ENCODE measurements at regions of chr11 and their contacts with region 1.

Region 1: GRCh38 chr11:85664615-85665481 is at the start of gene CREBZF:
- DNase-seq: peak; percentile 90 to 93 (median 92)
- H3K4me3 ChIP-seq: peak within 1 kb of the TSS; percentile 45 to 87
- H3K4me3 Mint-ChIP-seq: peak within 1 kb of the TSS; percentile 98 to 100 (median 100)
- H3K27ac ChIP-seq: peak within 1 kb of the TSS; percentile 96
- H3K27ac Mint-ChIP-seq: peak within 1 kb of the TSS; percentile 99 to 100 (median 100)
- H3K4me1 ChIP-seq: peaks cover 43% of the 10 kb centered on the region
- H3K4me1 Mint-ChIP-seq: peaks cover 29 to 58% (median 36%) of the 10 kb centered on the region in 4 donors
- H3K27me3 ChIP-seq: no peaks in the 10 kb centered on the region
- H3K27me3 Mint-ChIP-seq: no peaks in the 10 kb centered on the region
- total RNA-seq, gene CREBZF: 103 to 105 TPM

Region 2: DNA sequence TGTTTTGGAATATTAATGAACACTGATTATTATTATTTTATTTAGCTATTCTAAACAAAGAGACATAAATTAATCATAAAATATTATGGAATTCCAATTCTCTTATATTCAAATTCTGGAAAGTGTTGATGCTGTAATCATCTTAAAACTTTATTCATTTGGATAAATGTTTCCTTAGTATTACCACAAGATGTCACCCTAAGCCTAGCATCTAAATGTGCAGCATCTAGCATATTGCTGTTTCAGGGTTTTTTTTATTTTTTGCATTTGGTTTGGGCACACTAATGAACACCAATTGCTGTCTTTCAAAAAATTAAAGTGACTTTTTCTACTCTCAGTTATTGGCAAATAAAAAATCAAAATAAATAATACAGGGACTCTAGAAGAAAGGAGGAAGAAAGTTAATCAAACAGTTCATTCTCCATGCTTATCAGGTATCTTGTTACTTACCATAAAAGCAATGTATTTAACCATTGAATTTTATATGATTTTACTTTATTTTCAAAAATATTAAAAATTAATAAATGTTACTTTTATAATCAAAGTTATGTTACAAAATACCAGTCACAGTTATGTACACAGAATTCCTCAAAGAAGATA is 69.5 kb before region 1 on chr11:
- CTCF ChIA-PET with region 1: interaction called, 4 read pairs
- POLR2A ChIA-PET with region 1: no interaction called
- intact Hi-C with region 1: loop called (anchors 1 kb)
- DNase-seq: peak in 4 of 5 donors; percentile 41 to 63 (median 54)
- H3K4me3 ChIP-seq: no peak overlapping the region
- H3K4me3 Mint-ChIP-seq: no peak overlapping the region
- H3K27ac ChIP-seq: no peak overlapping the region
- H3K27ac Mint-ChIP-seq: no peak overlapping the region
- H3K4me1 ChIP-seq: no peaks in the 10 kb centered on the region
- H3K4me1 Mint-ChIP-seq: no peaks in the 10 kb centered on the region
- H3K27me3 ChIP-seq: no peaks in the 10 kb centered on the region
- H3K27me3 Mint-ChIP-seq: peaks cover 0 to 3% of the 10 kb centered on the region in 2 donors

Region 3: GRCh38 chr11:85619497-85619896 is 45.4 kb before region 1 on chr11:
- CTCF ChIA-PET with region 1: no interaction called
- POLR2A ChIA-PET with region 1: no interaction called
- intact Hi-C with region 1: no loop called
- DNase-seq: no peak
- H3K4me3 ChIP-seq: no peak overlapping the region
- H3K4me3 Mint-ChIP-seq: no peak overlapping the region
- H3K27ac ChIP-seq: no peak overlapping the region
- H3K27ac Mint-ChIP-seq: no peak overlapping the region
- H3K4me1 ChIP-seq: no peaks in the 10 kb centered on the region
- H3K4me1 Mint-ChIP-seq: no peaks in the 10 kb centered on the region
- H3K27me3 ChIP-seq: no peaks in the 10 kb centered on the region
- H3K27me3 Mint-ChIP-seq: no peaks in the 10 kb centered on the region

Region 4: DNA sequence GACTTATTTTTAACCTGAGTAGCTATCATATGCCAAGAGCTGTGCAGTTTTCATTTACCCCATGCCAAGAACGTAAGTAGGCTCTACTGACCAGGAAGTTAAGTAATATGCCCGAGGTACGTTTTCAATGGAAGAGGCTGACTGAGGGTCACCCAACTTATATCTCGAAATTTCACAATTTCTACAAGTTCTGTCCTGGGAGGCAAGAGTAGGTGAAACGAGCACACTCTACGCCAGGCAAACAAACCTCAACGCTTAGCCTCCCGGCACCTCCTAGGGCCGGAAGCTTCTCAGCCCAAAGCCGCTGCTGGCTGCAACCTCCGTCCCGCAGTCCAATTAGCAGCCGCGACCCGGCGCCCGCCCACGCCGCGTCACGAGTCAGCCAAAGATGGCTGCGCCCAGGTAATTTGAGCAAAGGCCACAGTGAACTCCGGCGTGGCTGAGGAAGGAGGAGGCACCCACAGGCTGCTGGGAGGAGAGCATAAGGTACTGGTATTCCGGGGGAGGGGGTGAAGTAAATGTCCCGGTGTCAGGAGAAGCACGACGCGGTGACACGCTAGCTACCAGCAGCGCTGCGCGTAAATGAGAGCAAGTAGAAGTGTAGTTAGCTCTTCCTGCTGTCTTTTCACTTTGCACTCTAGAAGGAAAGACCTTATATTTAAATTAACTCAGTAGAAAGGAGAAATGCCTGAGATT is 17.1 kb before region 1 on chr11 and contains the start of gene TMEM126A:
- CTCF ChIA-PET with region 1: interaction called, 25 read pairs
- POLR2A ChIA-PET with region 1: interaction called, 169 read pairs
- intact Hi-C with region 1: loop called (anchors 1 kb)
- DNase-seq: peak; percentile 87 to 93 (median 89)
- H3K4me3 ChIP-seq: peak within 1 kb of the TSS; percentile 57 to 76
- H3K4me3 Mint-ChIP-seq: peak within 1 kb of the TSS; percentile 92 to 99 (median 96)
- H3K27ac ChIP-seq: peak within 1 kb of the TSS; percentile 72
- H3K27ac Mint-ChIP-seq: peak within 1 kb of the TSS; percentile 88 to 99 (median 96)
- H3K4me1 ChIP-seq: peaks cover 26% of the 10 kb centered on the region
- H3K4me1 Mint-ChIP-seq: peaks cover 19 to 32% (median 27%) of the 10 kb centered on the region in 4 donors
- H3K27me3 ChIP-seq: peaks cover 4% of the 10 kb centered on the region
- H3K27me3 Mint-ChIP-seq: peaks cover 5 to 8% of the 10 kb centered on the region in 2 donors
- total RNA-seq, gene TMEM126A: 17.4 to 17.5 TPM

Region 5: GRCh38 chr11:85682330-85683305 is 17.8 kb after region 1 on chr11:
- CTCF ChIA-PET with region 1: interaction called, 5 read pairs
- POLR2A ChIA-PET with region 1: interaction called, 26 read pairs
- intact Hi-C with region 1: loop called (anchors 2 kb)
- DNase-seq: peak; percentile 32 to 55 (median 40)
- H3K4me3 ChIP-seq: peak overlapping the region; percentile 55 to 60
- H3K4me3 Mint-ChIP-seq: peak overlapping the region; percentile 75 to 93 (median 85)
- H3K27ac ChIP-seq: peak overlapping the region; percentile 49
- H3K27ac Mint-ChIP-seq: peak overlapping the region in 6 of 7 donors; percentile 74 to 87 (median 82)
- H3K4me1 ChIP-seq: peaks cover 12% of the 10 kb centered on the region
- H3K4me1 Mint-ChIP-seq: peaks cover 7 to 25% (median 16%) of the 10 kb centered on the region in 4 donors
- H3K27me3 ChIP-seq: no peaks in the 10 kb centered on the region
- H3K27me3 Mint-ChIP-seq: peaks cover 8 to 9% of the 10 kb centered on the region in 2 donors

Region 6: DNA sequence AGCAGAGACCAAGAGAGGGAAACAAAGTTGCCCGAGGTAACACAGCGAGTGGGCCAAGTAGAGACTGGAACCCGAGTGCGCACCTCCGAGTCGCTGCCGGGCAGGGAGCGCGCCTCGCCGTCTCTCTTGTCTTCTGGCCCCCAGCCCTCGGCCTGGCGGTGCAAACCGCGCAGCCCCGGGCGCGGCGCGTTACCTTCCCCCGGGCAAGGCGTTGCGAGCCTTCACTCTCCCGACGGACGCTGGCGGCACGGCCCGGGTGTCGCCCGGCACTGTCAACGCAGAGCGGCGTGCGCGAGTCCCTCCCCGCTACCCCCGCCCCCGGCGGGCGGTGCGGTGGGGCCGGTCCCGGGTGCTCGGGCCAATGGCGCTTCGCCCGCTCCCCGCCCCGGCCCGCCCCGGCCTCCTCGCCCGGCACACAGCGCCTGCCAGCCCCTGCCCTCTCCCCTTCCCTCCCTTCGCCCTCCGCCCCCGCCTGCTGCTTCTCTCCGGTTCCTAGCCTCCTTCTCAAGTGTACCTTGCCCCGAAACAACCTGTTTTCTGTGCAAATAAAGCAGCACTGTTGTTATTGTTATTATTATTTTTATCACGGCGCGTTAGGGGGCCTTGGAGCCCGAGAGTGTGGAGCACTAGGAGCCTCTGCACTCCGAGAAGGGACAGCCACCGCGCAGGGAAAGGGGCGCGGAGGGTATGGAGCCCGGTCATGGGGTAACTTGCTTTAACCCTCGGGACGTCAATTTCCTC is 146.2 kb after region 1 on chr11 and contains the start of gene SYTL2:
- CTCF ChIA-PET with region 1: no interaction called
- POLR2A ChIA-PET with region 1: interaction called, 15 read pairs
- intact Hi-C with region 1: no loop called
- DNase-seq: peak; percentile 74 to 83 (median 78)
- H3K4me3 ChIP-seq: peak within 1 kb of the TSS; percentile 58 to 85
- H3K4me3 Mint-ChIP-seq: peak within 1 kb of the TSS; percentile 89 to 97 (median 94)
- H3K27ac ChIP-seq: peak within 1 kb of the TSS; percentile 59
- H3K27ac Mint-ChIP-seq: peak within 1 kb of the TSS; percentile 90 to 96 (median 94)
- H3K4me1 ChIP-seq: peaks cover 38% of the 10 kb centered on the region
- H3K4me1 Mint-ChIP-seq: peaks cover 21 to 69% (median 45%) of the 10 kb centered on the region in 4 donors
- H3K27me3 ChIP-seq: no peaks in the 10 kb centered on the region
- H3K27me3 Mint-ChIP-seq: peaks cover 0 to 3% of the 10 kb centered on the region in 2 donors
- total RNA-seq, gene SYTL2: 35.5 to 35.7 TPM

Region 7: GRCh38 chr11:85854557-85855340 is 189.9 kb after region 1 on chr11:
- CTCF ChIA-PET with region 1: interaction called, 4 read pairs
- POLR2A ChIA-PET with region 1: interaction called, 11 read pairs
- intact Hi-C with region 1: loop called (anchors 1 kb)
- DNase-seq: peak; percentile 84 to 93 (median 88)
- H3K4me3 ChIP-seq: peak overlapping the region; percentile 81 to 95
- H3K4me3 Mint-ChIP-seq: peak overlapping the region; percentile 86 to 94 (median 91)
- H3K27ac ChIP-seq: peak overlapping the region; percentile 73
- H3K27ac Mint-ChIP-seq: peak overlapping the region; percentile 91 to 96 (median 94)
- H3K4me1 ChIP-seq: peaks cover 16% of the 10 kb centered on the region
- H3K4me1 Mint-ChIP-seq: peaks cover 6 to 16% (median 11%) of the 10 kb centered on the region in 4 donors
- H3K27me3 ChIP-seq: no peaks in the 10 kb centered on the region
- H3K27me3 Mint-ChIP-seq: peaks cover 0 to 2% of the 10 kb centered on the region in 2 donors

Region 8: DNA sequence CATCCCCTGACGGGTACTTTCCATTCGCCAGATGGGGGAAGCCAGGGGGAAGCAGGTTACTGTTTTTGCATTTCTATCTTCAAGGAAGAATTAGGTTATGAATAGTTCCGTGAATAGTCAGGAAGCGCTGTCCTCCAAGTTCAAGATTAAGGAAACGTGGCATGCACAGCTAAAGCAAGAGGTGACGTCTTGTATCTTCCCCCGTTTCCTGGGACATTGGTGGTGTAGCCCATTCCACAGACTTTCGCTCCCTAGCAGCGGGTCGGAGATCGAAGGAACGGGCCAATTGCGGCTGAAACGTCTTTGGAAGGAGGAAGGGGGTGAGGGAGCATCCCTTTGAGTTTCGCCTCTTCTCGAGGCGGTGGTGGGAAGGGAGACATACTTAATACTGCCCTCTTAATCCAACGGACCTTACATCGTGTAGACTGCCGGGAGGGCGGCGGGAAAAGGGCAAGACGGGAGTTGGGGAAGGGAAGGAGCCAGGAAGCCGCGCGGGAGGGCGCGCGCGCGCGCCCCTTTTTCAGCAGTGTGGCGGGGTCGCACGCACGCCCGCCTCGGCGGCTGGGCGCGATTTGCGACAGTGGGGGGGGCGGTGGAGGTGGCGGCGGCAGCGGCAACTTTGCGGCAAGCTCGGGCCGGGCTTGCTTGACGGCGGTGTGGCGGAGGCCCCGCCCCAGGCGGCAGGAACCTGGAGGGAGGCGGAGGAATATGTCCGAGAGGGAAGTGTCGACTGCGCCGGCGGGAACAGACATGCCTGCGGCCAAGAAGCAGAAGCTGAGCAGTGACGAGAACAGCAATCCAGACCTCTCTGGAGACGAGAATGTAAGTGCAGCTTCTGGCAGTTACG is 579.9 kb after region 1 on chr11 and contains the start of gene EED:
- CTCF ChIA-PET with region 1: no interaction called
- POLR2A ChIA-PET with region 1: interaction called, 4 read pairs
- intact Hi-C with region 1: loop called (anchors 1 kb)
- DNase-seq: peak; percentile 92 to 96 (median 93)
- H3K4me3 ChIP-seq: peak within 1 kb of the TSS; percentile 98 to 99
- H3K4me3 Mint-ChIP-seq: no peak within 1 kb of the TSS
- H3K27ac ChIP-seq: peak within 1 kb of the TSS; percentile 99
- H3K27ac Mint-ChIP-seq: no peak within 1 kb of the TSS
- H3K4me1 ChIP-seq: peaks cover 54% of the 10 kb centered on the region
- H3K4me1 Mint-ChIP-seq: peaks cover 0 to 35% (median 13%) of the 10 kb centered on the region in 4 donors
- H3K27me3 ChIP-seq: no peaks in the 10 kb centered on the region
- H3K27me3 Mint-ChIP-seq: peaks cover 0 to 2% of the 10 kb centered on the region in 2 donors
- total RNA-seq, gene EED: 47.1 to 51.0 TPM